ENCODE measurements at regions of chr7 and their contacts with region 1.

Region 1: GRCh38 chr7:36904802-36905201 is 180.5 kb upstream of the AOAH start:
- DNase-seq: no peak
- H3K4me3 ChIP-seq: no peak overlapping the region
- H3K27ac ChIP-seq: no peak overlapping the region
- H3K4me1 ChIP-seq: no peaks in the 10 kb centered on the region
- H3K27me3 ChIP-seq: peaks cover 5% of the 10 kb centered on the region
- CTCF ChIP-seq: no peak

Region 2: DNA sequence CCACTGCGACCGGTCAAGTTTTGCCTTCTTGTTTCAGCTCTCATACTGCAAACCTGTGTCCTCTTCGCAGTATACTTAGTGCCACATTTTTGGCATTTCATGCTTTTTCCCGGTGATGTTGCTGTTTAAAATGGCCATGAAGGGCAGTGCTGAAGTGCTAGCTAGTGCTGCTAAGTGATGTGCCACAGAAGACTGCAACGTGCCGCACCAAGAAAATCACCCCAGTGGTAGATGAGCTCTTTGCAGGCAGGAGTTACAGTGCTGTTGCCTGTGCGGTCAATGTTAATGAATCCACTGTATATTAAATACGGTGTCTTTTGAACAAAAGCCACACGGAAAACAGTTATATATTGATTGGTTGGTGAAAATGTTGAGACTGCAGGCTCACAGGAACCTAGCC is 394.8 kb before region 1 on chr7:
- CTCF ChIA-PET with region 1: no interaction called
- POLR2A ChIA-PET with region 1: interaction called, 10 read pairs
- intact Hi-C with region 1: no loop called
- DNase-seq: no peak
- H3K4me3 ChIP-seq: no peak overlapping the region
- H3K27ac ChIP-seq: no peak overlapping the region
- H3K4me1 ChIP-seq: no peaks in the 10 kb centered on the region
- H3K27me3 ChIP-seq: no peaks in the 10 kb centered on the region
- CTCF ChIP-seq: no peak

Region 3: DNA sequence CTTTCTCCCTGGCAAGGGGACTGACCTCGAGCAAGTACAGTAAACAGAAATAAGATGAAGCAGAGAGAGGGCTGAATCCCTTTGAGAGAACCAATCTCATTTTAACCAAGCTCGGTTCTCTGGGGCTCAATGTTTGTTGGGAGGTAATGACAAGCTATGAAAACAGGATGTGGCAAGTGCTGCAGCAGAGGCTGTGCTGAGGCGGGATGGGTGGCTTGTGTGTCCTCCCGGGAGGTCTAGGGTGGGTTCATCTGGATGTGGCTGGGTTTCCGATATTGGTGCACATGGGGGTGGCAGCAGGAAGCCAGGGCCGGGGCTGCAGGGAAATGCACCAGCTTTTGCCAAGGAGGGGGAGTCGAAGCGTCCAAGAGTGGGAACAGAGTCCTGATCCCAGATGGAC is 265.0 kb before region 1 on chr7:
- CTCF ChIA-PET with region 1: no interaction called
- POLR2A ChIA-PET with region 1: no interaction called
- intact Hi-C with region 1: no loop called
- DNase-seq: no peak
- H3K4me3 ChIP-seq: no peak overlapping the region
- H3K27ac ChIP-seq: no peak overlapping the region
- H3K4me1 ChIP-seq: no peaks in the 10 kb centered on the region
- H3K27me3 ChIP-seq: peaks cover 5% of the 10 kb centered on the region
- CTCF ChIP-seq: no peak